Heart right ventricle (tissue), 16 donors: ENCODE measurements at regions of chr18 and their contacts with region 1.

Region 1: GRCh38 chr18:8188184-8188583 is 421.1 kb upstream of the RAB12 start:
- DNase-seq: no peak
- ATAC-seq: no peak
- H3K4me3 ChIP-seq: no peak overlapping the region
- H3K27ac ChIP-seq: no peak overlapping the region
- H3K4me1 ChIP-seq: peaks cover 0 to 20% (median 0%) of the 10 kb centered on the region in 9 donors
- H3K27me3 ChIP-seq: no peaks in the 10 kb centered on the region
- CTCF ChIP-seq: no peak

Region 2: GRCh38 chr18:8242151-8242696 is 54.0 kb after region 1 on chr18:
- intact Hi-C with region 1: loop called in 1 of 10 experiments (anchors 10 kb)
- DNase-seq: no peak
- ATAC-seq: no peak
- H3K4me3 ChIP-seq: no peak overlapping the region
- H3K27ac ChIP-seq: no peak overlapping the region
- H3K4me1 ChIP-seq: peaks cover 0 to 12% (median 0%) of the 10 kb centered on the region in 9 donors
- H3K27me3 ChIP-seq: no peaks in the 10 kb centered on the region
- CTCF ChIP-seq: no peak